MCF 10A (cell line): ENCODE measurements at regions of chr10 and their contacts with region 1.

Region 1: GRCh38 chr10:114767101-114767985 is 54.2 kb upstream of the FHIP2A start:
- DNase-seq: peak; percentile 52
- H3K4me3 Mint-ChIP-seq: peak overlapping the region; percentile 74
- H3K27ac Mint-ChIP-seq: no peak overlapping the region
- H3K4me1 Mint-ChIP-seq: peaks cover 9% of the 10 kb centered on the region
- H3K27me3 Mint-ChIP-seq: no peaks in the 10 kb centered on the region
- CTCF ChIP-seq: no peak

Region 2: GRCh38 chr10:114714281-114714741 is 53.0 kb before region 1 on chr10:
- CTCF ChIA-PET with region 1: no interaction called
- POLR2A ChIA-PET with region 1: interaction called, 6 read pairs
- intact Hi-C with region 1: loop called (anchors 5 kb)
- DNase-seq: peak; percentile 97
- H3K4me3 Mint-ChIP-seq: peak overlapping the region; percentile 55
- H3K27ac Mint-ChIP-seq: peak overlapping the region; percentile 87
- H3K4me1 Mint-ChIP-seq: peaks cover 40% of the 10 kb centered on the region
- H3K27me3 Mint-ChIP-seq: no peaks in the 10 kb centered on the region
- CTCF ChIP-seq: no peak